Activated naive CD4-positive, alpha-beta T cell treated with anti-CD3 and anti-CD28 coated beads, Interleukin-2, amount 10 ng/mL, durations not matched to agents 7 days and 5 days (primary cell): ENCODE measurements at regions of chr4 and their contacts with region 1.

Region 1: GRCh38 chr4:173420324-173420752 is 21.4 kb upstream of the SCRG1 start:
- DNase-seq: no peak
- H3K4me3 Mint-ChIP-seq: no peak overlapping the region
- H3K27ac Mint-ChIP-seq: no peak overlapping the region
- H3K4me1 Mint-ChIP-seq: peaks cover 16% of the 10 kb centered on the region
- H3K27me3 Mint-ChIP-seq: peaks cover 13% of the 10 kb centered on the region

Region 2: DNA sequence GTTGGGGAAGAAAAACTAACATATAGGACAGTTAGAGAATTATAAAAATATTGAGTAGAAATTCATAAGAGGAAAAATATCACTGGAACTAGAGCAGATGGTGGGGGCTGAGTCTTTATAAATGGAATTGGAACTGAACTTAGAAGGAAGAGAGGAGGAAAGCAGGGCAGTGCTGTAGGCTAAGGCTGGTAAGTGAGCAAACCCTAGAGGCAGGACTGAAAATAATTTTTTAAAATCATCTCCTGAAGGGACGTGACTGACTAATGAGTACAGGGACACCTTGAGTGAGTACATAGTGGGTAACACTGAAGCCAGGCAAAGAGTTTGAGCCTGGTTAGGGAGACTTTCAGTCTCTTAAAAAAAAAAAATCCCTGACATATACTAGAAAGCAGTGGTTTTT is 188.4 kb before region 1 on chr4:
- CTCF ChIA-PET with region 1: no interaction called
- DNase-seq: no peak
- H3K4me3 Mint-ChIP-seq: no peak overlapping the region
- H3K27ac Mint-ChIP-seq: no peak overlapping the region
- H3K4me1 Mint-ChIP-seq: no peaks in the 10 kb centered on the region
- H3K27me3 Mint-ChIP-seq: no peaks in the 10 kb centered on the region

Region 3: DNA sequence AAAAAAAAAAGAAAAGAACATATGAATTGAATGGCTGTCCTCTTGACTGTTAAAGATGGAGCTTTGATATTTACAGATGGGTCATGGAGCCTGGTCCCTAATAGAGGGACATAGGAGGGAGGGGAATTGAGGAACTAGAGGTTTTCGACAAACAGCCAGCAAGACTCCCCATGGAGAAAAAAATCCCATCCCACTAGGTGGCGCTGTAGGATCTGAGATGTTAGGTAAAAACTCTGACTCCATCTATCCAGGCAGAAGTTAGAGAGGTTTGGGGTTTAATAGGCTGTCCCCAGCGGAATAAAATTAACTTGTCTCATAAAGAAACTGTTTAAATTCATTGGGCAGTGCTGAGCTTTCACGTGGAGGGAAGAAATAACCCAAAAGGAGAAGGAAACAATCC is 132.0 kb before region 1 on chr4:
- CTCF ChIA-PET with region 1: interaction called, 14 read pairs
- DNase-seq: peak; percentile 79
- H3K4me3 Mint-ChIP-seq: no peak overlapping the region
- H3K27ac Mint-ChIP-seq: no peak overlapping the region
- H3K4me1 Mint-ChIP-seq: peaks cover 17% of the 10 kb centered on the region
- H3K27me3 Mint-ChIP-seq: no peaks in the 10 kb centered on the region

Region 4: GRCh38 chr4:173494013-173494970 is 74.0 kb after region 1 on chr4:
- CTCF ChIA-PET with region 1: interaction called, 59 read pairs
- DNase-seq: peak; percentile 76
- H3K4me3 Mint-ChIP-seq: peak overlapping the region; percentile 67
- H3K27ac Mint-ChIP-seq: no peak overlapping the region
- H3K4me1 Mint-ChIP-seq: peaks cover 31% of the 10 kb centered on the region
- H3K27me3 Mint-ChIP-seq: peaks cover 43% of the 10 kb centered on the region

Region 5: DNA sequence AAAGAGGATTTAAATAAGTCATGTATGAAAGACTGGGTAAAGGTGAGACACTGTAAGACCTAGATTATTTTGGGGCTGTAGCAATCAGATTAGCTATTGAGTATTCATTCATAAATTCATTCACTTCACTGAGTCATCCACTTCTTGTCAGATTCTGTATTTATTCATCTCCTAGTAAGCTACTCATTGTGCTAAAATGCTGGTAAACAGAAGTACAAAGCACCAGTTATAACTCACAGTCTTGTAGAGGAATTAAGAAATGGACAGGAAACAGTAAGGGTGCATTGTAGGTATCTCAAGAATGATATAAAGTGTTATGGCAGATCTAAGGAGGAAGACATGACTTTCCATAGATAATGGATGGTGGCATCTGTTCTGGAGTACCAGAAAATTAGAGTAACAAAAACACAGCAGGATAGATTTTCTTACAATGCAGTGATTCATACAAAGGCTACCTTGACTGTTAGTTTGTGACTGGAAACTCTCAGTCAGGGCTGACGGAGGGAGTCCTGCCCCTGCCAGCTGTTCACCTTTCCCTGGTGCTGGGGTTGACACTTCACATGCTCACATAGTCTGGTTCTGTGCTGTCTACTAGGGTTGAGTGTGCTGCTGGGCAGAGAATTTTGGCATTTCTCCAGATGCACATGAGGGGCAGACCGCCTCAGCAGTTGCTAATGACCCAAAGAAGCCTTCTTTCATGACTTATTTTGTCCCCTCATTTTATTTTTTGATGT is 136.2 kb after region 1 on chr4:
- CTCF ChIA-PET with region 1: no interaction called
- DNase-seq: no peak
- H3K4me3 Mint-ChIP-seq: no peak overlapping the region
- H3K27ac Mint-ChIP-seq: no peak overlapping the region
- H3K4me1 Mint-ChIP-seq: no peaks in the 10 kb centered on the region
- H3K27me3 Mint-ChIP-seq: peaks cover 3% of the 10 kb centered on the region

Region 6: DNA sequence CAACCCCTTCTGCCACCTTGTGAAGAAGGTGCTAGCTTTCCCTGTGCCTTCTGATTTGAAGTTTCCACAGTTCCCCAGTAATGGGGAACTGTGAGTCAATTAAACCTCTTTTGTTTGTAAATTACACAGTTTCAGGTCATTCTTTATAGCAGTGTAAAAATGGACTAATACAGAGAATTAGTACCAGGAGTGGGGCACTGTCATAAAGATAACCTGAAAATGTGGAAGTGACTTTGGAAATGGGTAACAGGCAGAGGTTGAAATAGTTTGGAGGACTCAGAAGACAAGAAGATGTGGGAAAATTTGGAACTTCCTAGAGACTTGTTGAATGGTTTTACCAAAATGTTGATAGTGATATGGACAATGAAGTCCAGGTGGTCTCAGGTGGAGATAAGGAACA is 240.7 kb after region 1 on chr4:
- CTCF ChIA-PET with region 1: no interaction called
- DNase-seq: no peak
- H3K4me3 Mint-ChIP-seq: no peak overlapping the region
- H3K27ac Mint-ChIP-seq: no peak overlapping the region
- H3K4me1 Mint-ChIP-seq: no peaks in the 10 kb centered on the region
- H3K27me3 Mint-ChIP-seq: no peaks in the 10 kb centered on the region